Activated CD4-positive, alpha-beta T cell treated with anti-CD3 and anti-CD28 coated beads, Interleukin-2, amount 10 ng/mL, durations not matched to agents 24 days and 14 days (primary cell): ENCODE measurements at regions of chr19 and their contacts with region 1.

Region 1: DNA sequence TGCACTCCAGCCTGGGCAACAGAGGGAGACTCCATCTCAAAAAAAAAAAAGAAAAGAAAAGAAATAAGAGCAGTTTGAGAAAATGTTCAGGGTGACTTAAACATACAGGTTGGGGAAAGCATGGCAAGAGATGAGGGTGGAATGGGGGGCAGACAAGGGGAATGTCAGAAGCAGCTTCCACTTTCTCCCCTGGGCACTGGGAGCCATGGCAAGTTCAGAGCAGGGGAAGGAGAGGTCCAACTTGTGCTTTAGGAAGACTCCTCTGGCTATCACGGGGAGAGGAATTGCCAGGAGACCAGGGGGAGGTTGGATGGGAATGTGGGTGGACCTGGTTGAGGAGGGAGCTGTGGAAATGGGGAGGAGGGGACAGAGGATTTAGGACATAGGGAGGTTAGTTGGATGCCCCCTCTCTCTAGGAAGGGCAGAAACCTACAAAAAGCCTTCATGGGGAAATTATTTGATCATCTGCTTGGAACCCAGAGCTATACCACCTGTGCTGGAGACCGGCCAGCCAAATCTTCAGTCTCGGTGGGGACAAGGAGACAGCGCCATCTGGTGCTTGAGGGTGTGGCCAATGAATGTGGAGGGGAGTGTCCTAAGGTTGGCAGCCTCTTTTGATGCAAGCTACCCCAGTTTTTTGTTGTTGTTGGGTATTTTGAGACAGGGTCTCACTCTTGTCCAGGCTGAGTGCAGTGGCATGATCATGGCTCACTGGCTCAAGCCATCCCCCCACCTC is 7.3 kb upstream of the STRN4 start:
- DNase-seq: peak; percentile 92
- H3K4me3 Mint-ChIP-seq: no peak overlapping the region
- H3K27ac Mint-ChIP-seq: no peak overlapping the region
- H3K4me1 Mint-ChIP-seq: peaks cover 13% of the 10 kb centered on the region
- H3K27me3 Mint-ChIP-seq: no peaks in the 10 kb centered on the region

Region 2: GRCh38 chr19:46529622-46530462 is 223.7 kb before region 1 on chr19:
- intact Hi-C with region 1: loop called (anchors 2 kb)
- DNase-seq: peak; percentile 92
- H3K4me3 Mint-ChIP-seq: peak overlapping the region; percentile 8
- H3K27ac Mint-ChIP-seq: peak overlapping the region; percentile 39
- H3K4me1 Mint-ChIP-seq: peaks cover 23% of the 10 kb centered on the region
- H3K27me3 Mint-ChIP-seq: no peaks in the 10 kb centered on the region

Region 3: GRCh38 chr19:46840136-46840942 is 86.8 kb after region 1 on chr19:
- intact Hi-C with region 1: loop called (anchors 1 kb)
- DNase-seq: peak; percentile 84
- H3K4me3 Mint-ChIP-seq: no peak overlapping the region
- H3K27ac Mint-ChIP-seq: no peak overlapping the region
- H3K4me1 Mint-ChIP-seq: peaks cover 3% of the 10 kb centered on the region
- H3K27me3 Mint-ChIP-seq: no peaks in the 10 kb centered on the region

Region 4: GRCh38 chr19:46990991-46991676 is 237.5 kb after region 1 on chr19:
- intact Hi-C with region 1: loop called (anchors 2 kb)
- DNase-seq: peak; percentile 87
- H3K4me3 Mint-ChIP-seq: no peak overlapping the region
- H3K27ac Mint-ChIP-seq: peak overlapping the region; percentile 63
- H3K4me1 Mint-ChIP-seq: peaks cover 11% of the 10 kb centered on the region
- H3K27me3 Mint-ChIP-seq: no peaks in the 10 kb centered on the region